CD8-positive, alpha-beta T cell (primary cell): ENCODE measurements at regions of chr1 and their contacts with region 1.

Region 1: GRCh38 chr1:36397378-36398230 is at the start of gene LSM10:
- DNase-seq: peak; percentile 75 to 96 (median 90)
- ATAC-seq: peak; percentile 91
- H3K4me3 ChIP-seq: peak within 1 kb of the TSS; percentile 97 to 98
- H3K4me3 Mint-ChIP-seq: peak within 1 kb of the TSS; percentile 98
- H3K27ac ChIP-seq: peak within 1 kb of the TSS; percentile 85 to 93
- H3K27ac Mint-ChIP-seq: peak within 1 kb of the TSS; percentile 96
- H3K4me1 ChIP-seq: peaks cover 11% of the 10 kb centered on the region
- H3K4me1 Mint-ChIP-seq: peaks cover 31% of the 10 kb centered on the region
- H3K27me3 ChIP-seq: no peaks in the 10 kb centered on the region
- H3K27me3 Mint-ChIP-seq: no peaks in the 10 kb centered on the region
- CTCF ChIP-seq: no peak
- total RNA-seq, gene LSM10: 20.9 to 21.4 TPM

Region 2: GRCh38 chr1:36088575-36089443 is 308.8 kb before region 1 on chr1 and contains the start of gene ADPRS:
- CTCF ChIA-PET with region 1: no interaction called
- POLR2A ChIA-PET with region 1: no interaction called
- intact Hi-C with region 1: loop called (anchors 5 kb)
- DNase-seq: peak; percentile 81 to 96 (median 91)
- ATAC-seq: peak; percentile 89
- H3K4me3 ChIP-seq: peak within 1 kb of the TSS; percentile 89 to 98
- H3K4me3 Mint-ChIP-seq: peak within 1 kb of the TSS; percentile 90
- H3K27ac ChIP-seq: peak within 1 kb of the TSS; percentile 84 to 95
- H3K27ac Mint-ChIP-seq: peak within 1 kb of the TSS; percentile 94
- H3K4me1 ChIP-seq: peaks cover 24% of the 10 kb centered on the region
- H3K4me1 Mint-ChIP-seq: peaks cover 25% of the 10 kb centered on the region
- H3K27me3 ChIP-seq: peaks cover 5 to 6% of the 10 kb centered on the region in 2 experiments
- H3K27me3 Mint-ChIP-seq: peaks cover 15% of the 10 kb centered on the region
- CTCF ChIP-seq: peak; percentile 98
- total RNA-seq, gene ADPRS: 26.2 to 26.7 TPM

Region 3: GRCh38 chr1:36342481-36343478 is 54.8 kb before region 1 on chr1:
- CTCF ChIA-PET with region 1: interaction called, 38 read pairs
- POLR2A ChIA-PET with region 1: no interaction called
- intact Hi-C with region 1: no loop called
- DNase-seq: peak; percentile 36 to 80 (median 68)
- ATAC-seq: peak; percentile 87
- H3K4me3 ChIP-seq: no peak overlapping the region
- H3K4me3 Mint-ChIP-seq: no peak overlapping the region
- H3K27ac ChIP-seq: no peak overlapping the region
- H3K27ac Mint-ChIP-seq: no peak overlapping the region
- H3K4me1 ChIP-seq: peaks cover 3% of the 10 kb centered on the region
- H3K4me1 Mint-ChIP-seq: peaks cover 13% of the 10 kb centered on the region
- H3K27me3 ChIP-seq: no peaks in the 10 kb centered on the region
- H3K27me3 Mint-ChIP-seq: no peaks in the 10 kb centered on the region
- CTCF ChIP-seq: peak; percentile 69

Region 4: GRCh38 chr1:36411674-36412520 is 14.3 kb after region 1 on chr1:
- CTCF ChIA-PET with region 1: interaction called, 10 read pairs
- POLR2A ChIA-PET with region 1: no interaction called
- intact Hi-C with region 1: no loop called
- DNase-seq: peak in 4 of 9 experiments; percentile 11 to 68 (median 56)
- ATAC-seq: peak; percentile 96
- H3K4me3 ChIP-seq: no peak overlapping the region
- H3K4me3 Mint-ChIP-seq: no peak overlapping the region
- H3K27ac ChIP-seq: no peak overlapping the region
- H3K27ac Mint-ChIP-seq: peak overlapping the region; percentile 32
- H3K4me1 ChIP-seq: peaks cover 4% of the 10 kb centered on the region
- H3K4me1 Mint-ChIP-seq: peaks cover 12% of the 10 kb centered on the region
- H3K27me3 ChIP-seq: no peaks in the 10 kb centered on the region
- H3K27me3 Mint-ChIP-seq: no peaks in the 10 kb centered on the region
- CTCF ChIP-seq: no peak

Region 5: GRCh38 chr1:36436817-36437216 is 39.2 kb after region 1 on chr1:
- CTCF ChIA-PET with region 1: no interaction called
- POLR2A ChIA-PET with region 1: no interaction called
- intact Hi-C with region 1: no loop called
- DNase-seq: no peak
- ATAC-seq: no peak
- H3K4me3 ChIP-seq: no peak overlapping the region
- H3K4me3 Mint-ChIP-seq: no peak overlapping the region
- H3K27ac ChIP-seq: no peak overlapping the region
- H3K27ac Mint-ChIP-seq: no peak overlapping the region
- H3K4me1 ChIP-seq: no peaks in the 10 kb centered on the region
- H3K4me1 Mint-ChIP-seq: no peaks in the 10 kb centered on the region
- H3K27me3 ChIP-seq: no peaks in the 10 kb centered on the region
- H3K27me3 Mint-ChIP-seq: no peaks in the 10 kb centered on the region
- CTCF ChIP-seq: no peak

Region 6: GRCh38 chr1:36463803-36464604 is 66.4 kb after region 1 on chr1 and contains the start of gene MRPS15:
- CTCF ChIA-PET with region 1: no interaction called
- POLR2A ChIA-PET with region 1: no interaction called
- intact Hi-C with region 1: loop called in 1 of 2 experiments (anchors 2 kb)
- DNase-seq: peak; percentile 88 to 97 (median 94)
- ATAC-seq: peak; percentile 98
- H3K4me3 ChIP-seq: peak within 1 kb of the TSS; percentile 90 to 92
- H3K4me3 Mint-ChIP-seq: peak within 1 kb of the TSS; percentile 91
- H3K27ac ChIP-seq: peak within 1 kb of the TSS; percentile 82 to 90
- H3K27ac Mint-ChIP-seq: peak within 1 kb of the TSS; percentile 96
- H3K4me1 ChIP-seq: peaks cover 12% of the 10 kb centered on the region
- H3K4me1 Mint-ChIP-seq: peaks cover 29% of the 10 kb centered on the region
- H3K27me3 ChIP-seq: no peaks in the 10 kb centered on the region
- H3K27me3 Mint-ChIP-seq: no peaks in the 10 kb centered on the region
- CTCF ChIP-seq: no peak
- total RNA-seq, gene MRPS15: 37.9 to 45.4 TPM